Activated CD8-positive, alpha-beta T cell treated with anti-CD3 and anti-CD28 coated beads, Interleukin-2, amount 10 ng/mL, durations not matched to agents 7 days and 5 days (primary cell): ENCODE measurements at regions of chr2 and their contacts with region 1.

Region 1: DNA sequence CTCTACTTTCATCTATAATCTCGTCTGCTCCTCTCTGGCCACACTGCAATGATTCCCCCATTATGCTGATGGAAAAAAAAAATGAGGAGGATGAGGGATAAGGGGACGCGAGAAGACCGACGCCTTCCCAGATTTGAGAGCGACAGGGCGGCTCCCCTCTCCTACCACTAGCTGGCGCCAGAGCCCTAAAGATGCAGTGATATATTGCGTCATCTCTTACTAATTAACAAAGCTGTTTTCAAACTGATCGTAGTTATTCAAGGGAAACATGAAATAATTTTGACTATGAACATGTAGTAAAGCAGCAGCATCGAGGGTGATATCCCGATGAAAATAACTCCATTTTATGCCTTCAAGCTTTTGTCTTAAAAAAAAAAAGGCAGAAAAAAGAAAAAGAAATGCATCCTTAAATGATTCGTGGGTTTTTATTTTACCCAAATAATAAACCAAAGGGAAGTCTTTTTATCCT is 48.0 kb upstream of the HNRNPA3 start:
- DNase-seq: peak; percentile 86
- ATAC-seq: peak; percentile 79
- H3K4me3 Mint-ChIP-seq: no peak overlapping the region
- H3K27ac Mint-ChIP-seq: no peak overlapping the region
- H3K4me1 Mint-ChIP-seq: peaks cover 29% of the 10 kb centered on the region
- H3K27me3 Mint-ChIP-seq: peaks cover 10% of the 10 kb centered on the region

Region 2: GRCh38 chr2:177195194-177195593 is 30.6 kb after region 1 on chr2:
- CTCF ChIA-PET with region 1: interaction called, 27 read pairs
- POLR2A ChIA-PET with region 1: interaction called, 3 read pairs
- DNase-seq: no peak
- ATAC-seq: no peak
- H3K4me3 Mint-ChIP-seq: no peak overlapping the region
- H3K27ac Mint-ChIP-seq: no peak overlapping the region
- H3K4me1 Mint-ChIP-seq: no peaks in the 10 kb centered on the region
- H3K27me3 Mint-ChIP-seq: no peaks in the 10 kb centered on the region

Region 3: DNA sequence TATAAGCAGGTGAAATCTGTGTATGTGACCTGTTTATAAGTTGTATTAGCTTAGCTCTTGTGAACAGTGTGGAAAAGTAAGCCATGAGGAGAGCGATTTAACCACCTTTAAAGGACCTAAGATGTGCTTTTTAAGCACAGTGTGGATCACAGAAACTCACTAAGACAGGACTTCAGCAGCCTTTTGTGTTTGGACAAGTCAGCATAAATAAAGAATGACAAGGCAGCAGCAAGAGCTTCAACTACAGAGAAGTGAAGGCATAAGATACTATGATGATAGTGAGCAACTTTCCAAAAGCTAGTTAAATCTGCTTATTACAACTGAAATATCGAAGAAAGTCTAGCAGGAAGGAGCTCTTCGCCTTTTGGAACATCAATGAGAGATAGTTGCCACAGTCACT is 56.9 kb after region 1 on chr2:
- CTCF ChIA-PET with region 1: interaction called, 23 read pairs
- POLR2A ChIA-PET with region 1: no interaction called
- DNase-seq: no peak
- ATAC-seq: no peak
- H3K4me3 Mint-ChIP-seq: no peak overlapping the region
- H3K27ac Mint-ChIP-seq: no peak overlapping the region
- H3K4me1 Mint-ChIP-seq: peaks cover 38% of the 10 kb centered on the region
- H3K27me3 Mint-ChIP-seq: no peaks in the 10 kb centered on the region

Region 4: DNA sequence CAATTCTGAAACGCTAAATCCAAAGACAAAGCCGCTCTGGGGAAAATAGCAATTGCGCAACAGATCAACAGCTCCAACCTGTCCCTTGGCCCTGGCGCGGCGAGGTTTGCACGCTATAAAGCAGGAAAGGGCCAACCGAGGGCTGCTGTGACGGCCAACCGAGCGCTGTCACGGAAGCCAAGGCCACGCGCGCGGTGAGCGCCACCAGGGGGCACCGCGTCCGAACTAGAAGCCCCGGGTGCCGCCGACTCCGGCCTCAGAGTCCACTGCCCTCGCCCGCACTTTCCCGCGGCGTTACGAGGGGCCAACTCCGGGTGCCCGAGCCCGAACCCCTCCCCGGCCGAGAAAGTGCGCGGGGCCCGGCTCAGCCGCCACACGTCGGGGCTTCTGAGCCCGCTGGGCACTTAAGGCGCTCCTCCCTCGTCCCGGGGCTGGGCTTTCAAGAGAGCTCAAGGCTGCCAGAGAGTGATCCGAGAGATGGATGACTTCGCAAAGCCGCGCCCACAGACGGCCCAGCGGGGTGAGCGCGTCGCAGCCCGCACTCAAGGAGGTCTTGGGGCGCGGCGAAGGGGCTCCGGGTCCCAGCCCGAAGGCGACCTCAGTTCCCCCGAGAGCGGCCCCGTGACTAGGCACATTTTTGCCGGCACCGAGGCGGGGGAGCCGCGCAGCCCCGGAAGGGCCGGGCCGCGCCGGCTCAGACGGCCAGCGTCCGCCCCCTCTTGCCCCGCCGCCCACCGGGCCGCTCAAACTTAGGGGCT is 99.0 kb after region 1 on chr2:
- CTCF ChIA-PET with region 1: interaction called, 105 read pairs
- POLR2A ChIA-PET with region 1: interaction called, 58 read pairs
- DNase-seq: peak; percentile 95
- ATAC-seq: peak; percentile 68
- H3K4me3 Mint-ChIP-seq: peak overlapping the region; percentile 86
- H3K27ac Mint-ChIP-seq: peak overlapping the region; percentile 100
- H3K4me1 Mint-ChIP-seq: peaks cover 52% of the 10 kb centered on the region
- H3K27me3 Mint-ChIP-seq: no peaks in the 10 kb centered on the region

Region 5: DNA sequence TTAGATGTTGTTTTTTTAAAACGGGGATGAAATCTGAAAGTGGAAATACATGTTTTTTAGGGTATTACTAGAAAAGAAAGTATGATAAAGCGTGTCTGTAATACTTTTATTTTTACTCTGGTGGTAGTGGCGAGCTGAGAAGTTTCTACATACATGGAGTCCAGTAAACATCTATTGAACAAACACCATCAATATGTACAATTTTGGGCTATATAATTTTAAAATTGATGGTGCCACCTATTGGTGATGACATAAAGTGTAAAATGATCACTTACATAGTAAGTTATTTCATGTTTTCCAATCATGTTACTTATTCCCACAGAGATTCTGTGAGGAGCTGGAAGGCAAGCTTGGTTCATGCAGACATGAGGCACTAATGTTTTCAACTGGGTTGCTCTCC is 131.4 kb after region 1 on chr2:
- CTCF ChIA-PET with region 1: interaction called, 64 read pairs
- POLR2A ChIA-PET with region 1: no interaction called
- DNase-seq: no peak
- ATAC-seq: peak; percentile 60
- H3K4me3 Mint-ChIP-seq: no peak overlapping the region
- H3K27ac Mint-ChIP-seq: no peak overlapping the region
- H3K4me1 Mint-ChIP-seq: peaks cover 50% of the 10 kb centered on the region
- H3K27me3 Mint-ChIP-seq: no peaks in the 10 kb centered on the region

Region 6: DNA sequence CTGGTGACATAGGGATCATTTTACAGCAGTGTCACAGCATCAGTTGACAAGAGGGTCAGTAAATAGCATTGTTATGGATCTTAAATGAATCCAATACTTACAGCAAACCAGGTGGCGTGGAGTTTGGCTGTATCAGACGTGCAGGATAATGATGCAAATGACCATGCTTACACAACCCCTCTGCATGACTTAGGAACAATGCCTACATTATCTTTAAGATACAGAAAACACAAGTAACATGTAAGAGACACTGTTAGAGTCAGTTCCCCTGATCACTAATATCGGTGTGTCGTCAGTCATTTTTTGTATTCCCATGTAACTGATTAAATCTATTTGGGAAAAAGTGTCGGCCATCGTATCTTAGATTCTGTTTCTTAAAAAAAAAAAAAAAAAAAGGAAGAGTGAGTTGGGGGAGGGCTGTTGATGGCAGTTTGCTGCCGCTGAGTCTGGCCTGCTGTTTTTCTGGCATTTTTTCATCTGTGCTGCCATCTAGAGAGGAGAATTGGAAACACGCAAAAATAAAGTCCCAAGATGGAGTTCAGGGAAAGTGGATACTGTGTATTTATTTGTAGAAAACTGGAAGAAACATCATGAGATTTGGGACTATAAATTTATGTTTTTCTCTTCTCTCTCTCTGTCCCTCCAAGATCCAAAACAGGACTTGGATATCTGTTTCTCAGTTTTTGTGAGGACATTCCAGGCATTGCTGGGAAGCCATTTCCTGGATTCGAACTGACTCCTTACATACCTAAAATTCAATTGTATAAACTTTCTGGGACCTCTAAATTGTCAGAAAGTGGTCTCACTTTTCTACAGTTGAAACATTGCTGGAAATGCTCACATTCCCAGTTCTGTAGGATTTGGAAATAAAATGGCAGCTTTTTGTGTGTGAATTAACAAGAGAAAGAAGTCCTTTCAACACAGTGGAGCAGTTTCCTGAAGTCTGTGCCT is 167.7 kb after region 1 on chr2:
- CTCF ChIA-PET with region 1: interaction called, 217 read pairs
- POLR2A ChIA-PET with region 1: interaction called, 4 read pairs
- DNase-seq: peak; percentile 69
- ATAC-seq: peak; percentile 82
- H3K4me3 Mint-ChIP-seq: no peak overlapping the region
- H3K27ac Mint-ChIP-seq: no peak overlapping the region
- H3K4me1 Mint-ChIP-seq: peaks cover 15% of the 10 kb centered on the region
- H3K27me3 Mint-ChIP-seq: no peaks in the 10 kb centered on the region

Region 7: DNA sequence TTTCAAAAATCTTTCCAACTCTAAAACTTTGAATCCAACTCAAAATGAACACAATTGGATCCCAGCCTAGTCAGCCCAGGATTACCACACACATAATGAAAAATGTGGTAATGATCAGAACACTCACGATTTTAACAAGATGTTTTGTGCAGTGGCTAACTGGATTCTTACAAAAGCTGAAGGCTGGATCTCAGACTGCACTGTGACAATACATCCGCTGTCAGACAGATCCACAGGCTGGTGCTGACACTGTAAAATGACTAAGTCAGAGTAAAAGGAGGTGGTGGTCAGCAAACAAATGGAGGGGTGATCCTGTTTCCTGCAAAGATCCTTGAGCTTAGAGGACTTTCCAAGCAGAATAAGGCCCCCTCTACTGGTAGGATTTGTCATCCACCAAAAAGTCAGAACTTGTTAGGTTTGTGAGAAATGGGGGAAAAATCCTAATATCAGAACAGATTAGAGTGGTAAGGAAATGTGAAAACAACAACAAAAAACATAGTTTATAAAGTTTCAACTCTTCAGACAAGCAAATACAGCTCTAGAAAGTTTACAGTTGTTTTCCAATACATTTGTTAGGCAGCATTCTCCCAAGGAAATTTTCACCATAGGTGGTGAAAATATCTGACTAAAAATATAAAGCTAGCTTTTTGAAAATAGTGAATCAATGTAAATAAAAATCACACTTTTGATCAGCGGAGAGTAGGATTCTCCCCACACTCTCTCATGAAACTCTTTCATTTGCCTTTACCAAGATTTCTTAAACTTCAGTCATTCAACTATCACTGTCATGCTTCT is 439.9 kb after region 1 on chr2:
- CTCF ChIA-PET with region 1: interaction called, 18 read pairs
- POLR2A ChIA-PET with region 1: no interaction called
- DNase-seq: no peak
- ATAC-seq: no peak
- H3K4me3 Mint-ChIP-seq: no peak overlapping the region
- H3K27ac Mint-ChIP-seq: no peak overlapping the region
- H3K4me1 Mint-ChIP-seq: peaks cover 3% of the 10 kb centered on the region
- H3K27me3 Mint-ChIP-seq: peaks cover 11% of the 10 kb centered on the region